ENCODE measurements at regions of chr17 and their contacts with region 1.

Region 1: GRCh38 chr17:27455914-27456680 is at the start of gene KSR1:
- DNase-seq: peak; percentile 72 to 82
- ATAC-seq: peak; percentile 86 to 97 (median 93)
- H3K4me3 ChIP-seq: peak within 1 kb of the TSS; percentile 45 to 91 (median 88)
- H3K27ac ChIP-seq: peak within 1 kb of the TSS; percentile 32 to 88 (median 80)
- H3K4me1 ChIP-seq: peaks cover 8 to 35% (median 23%) of the 10 kb centered on the region in 9 donors
- H3K27me3 ChIP-seq: no peaks in the 10 kb centered on the region
- CTCF ChIP-seq: peak in 8 of 9 donors; percentile 22 to 74 (median 53)
- total RNA-seq, gene KSR1: 5.6 to 19.6 (median 8.6) TPM

Region 2: GRCh38 chr17:27236717-27237315 is 219.3 kb before region 1 on chr17:
- intact Hi-C with region 1: loop called in 5 of 10 experiments (anchors 10 kb)
- DNase-seq: peak in 1 of 2 donors; percentile 80
- ATAC-seq: peak in 7 of 8 donors; percentile 61 to 79 (median 77)
- H3K4me3 ChIP-seq: no peak overlapping the region
- H3K27ac ChIP-seq: no peak overlapping the region
- H3K4me1 ChIP-seq: peaks cover 0 to 54% (median 3%) of the 10 kb centered on the region in 9 donors
- H3K27me3 ChIP-seq: no peaks in the 10 kb centered on the region
- CTCF ChIP-seq: peak; percentile 84 to 97 (median 94)

Region 3: DNA sequence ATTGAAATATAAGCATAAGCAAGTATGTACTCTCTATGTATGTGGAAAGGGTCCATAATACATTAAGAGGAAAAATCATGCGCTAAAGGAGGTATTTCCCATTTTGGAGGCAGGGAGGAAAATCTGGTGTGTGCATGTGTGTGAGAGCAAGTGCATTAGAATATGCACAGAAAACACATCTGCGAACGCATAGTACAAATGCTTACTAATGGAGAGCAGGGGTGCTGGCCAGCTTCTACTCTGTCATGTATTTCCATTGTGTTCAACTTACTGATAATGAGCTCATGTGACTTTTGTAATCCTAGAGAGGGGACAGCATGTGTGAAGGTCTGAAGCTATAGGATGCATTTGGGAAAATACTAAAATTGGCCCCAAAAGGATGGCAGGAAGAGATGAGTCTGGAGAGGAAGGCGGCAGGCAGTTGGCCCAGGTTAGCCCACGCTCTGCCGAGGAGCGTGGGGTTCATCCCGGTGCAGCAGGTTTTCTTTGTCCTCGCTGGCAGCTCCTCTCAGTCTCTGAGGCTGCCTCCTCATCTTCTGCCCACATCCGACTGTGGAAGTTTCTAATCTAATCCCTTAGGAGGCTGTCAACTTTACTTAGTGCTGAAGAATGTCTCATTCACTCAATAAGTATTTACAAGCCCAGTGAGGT is 17.6 kb before region 1 on chr17:
- intact Hi-C with region 1: no loop called
- DNase-seq: no peak
- ATAC-seq: no peak
- H3K4me3 ChIP-seq: no peak overlapping the region
- H3K27ac ChIP-seq: no peak overlapping the region
- H3K4me1 ChIP-seq: no peaks in the 10 kb centered on the region
- H3K27me3 ChIP-seq: no peaks in the 10 kb centered on the region
- CTCF ChIP-seq: no peak

Region 4: DNA sequence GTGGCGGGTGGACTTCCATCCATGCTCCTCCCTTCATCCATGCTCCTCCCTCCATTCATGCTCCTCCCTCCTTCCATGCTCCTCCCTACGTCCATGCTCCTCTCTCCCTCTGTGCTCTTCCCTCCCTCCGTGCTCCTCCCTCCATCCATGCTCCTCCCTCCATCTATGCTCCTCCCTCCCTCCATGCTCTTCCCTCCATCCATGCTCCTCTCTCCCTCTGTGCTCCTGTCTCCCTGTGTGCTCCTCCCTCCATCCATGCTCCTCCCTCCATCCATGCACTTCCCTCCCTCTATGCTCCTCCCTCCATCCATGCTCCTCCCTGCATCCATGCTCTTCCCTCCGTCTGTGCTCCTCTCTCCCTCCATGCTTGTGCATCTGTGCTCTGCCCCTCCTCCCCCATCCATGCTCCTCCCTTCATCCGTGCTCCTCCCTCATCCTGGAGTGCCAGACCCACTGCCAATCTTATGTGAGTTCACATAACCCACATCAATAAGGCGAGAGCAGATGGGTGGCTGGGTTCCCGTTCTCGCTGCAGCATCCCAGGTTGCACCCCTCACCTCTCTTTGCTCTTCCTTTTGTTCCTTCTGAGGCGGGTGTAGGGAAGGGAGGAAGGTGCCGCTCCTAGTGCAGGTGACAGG is 22.9 kb after region 1 on chr17:
- intact Hi-C with region 1: loop called in 1 of 10 experiments (anchors 2 kb)
- DNase-seq: no peak
- ATAC-seq: peak in 1 of 8 donors; percentile 13
- H3K4me3 ChIP-seq: no peak overlapping the region
- H3K27ac ChIP-seq: no peak overlapping the region
- H3K4me1 ChIP-seq: peaks cover 3 to 46% (median 17%) of the 10 kb centered on the region in 9 donors
- H3K27me3 ChIP-seq: no peaks in the 10 kb centered on the region
- CTCF ChIP-seq: no peak

Region 5: DNA sequence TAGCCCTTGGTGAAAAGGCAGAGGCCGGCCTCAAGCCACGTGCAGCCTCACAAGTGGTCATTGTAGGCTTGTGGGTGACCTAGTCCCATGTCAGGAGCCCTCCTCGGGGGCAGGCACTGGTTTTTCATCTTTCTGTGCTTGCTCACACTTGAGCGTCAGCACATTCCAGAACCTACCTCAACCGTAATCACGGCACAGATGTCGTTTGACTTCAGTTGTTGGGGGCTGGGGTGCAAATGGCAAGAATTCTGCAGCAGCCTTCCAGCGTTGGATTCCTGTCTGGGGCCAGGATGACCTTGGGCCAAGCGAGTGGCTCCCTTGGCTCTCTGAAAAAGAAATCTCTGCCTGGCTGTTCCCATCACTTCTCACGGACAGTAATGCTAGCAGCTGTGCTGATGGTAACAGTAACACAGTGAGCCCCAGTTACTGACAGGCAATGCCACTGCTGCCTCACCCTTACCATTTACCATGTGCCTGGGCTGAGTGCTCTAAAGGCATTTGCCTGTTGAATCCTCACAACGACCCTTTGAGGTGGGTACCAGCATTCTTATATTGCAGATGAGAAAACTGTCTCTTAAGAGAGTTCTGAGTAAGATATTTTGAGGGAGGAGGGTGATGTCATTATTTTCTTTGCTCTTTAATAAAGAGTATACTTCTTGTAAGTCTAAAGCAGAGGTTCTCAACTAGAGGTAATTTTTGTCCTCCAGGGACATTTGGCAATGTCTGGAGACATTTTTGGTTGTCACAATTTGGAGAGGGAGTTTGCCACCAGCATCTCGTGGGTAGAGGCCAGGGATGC is 46.6 kb after region 1 on chr17:
- intact Hi-C with region 1: no loop called
- DNase-seq: no peak
- ATAC-seq: peak in 7 of 8 donors; percentile 45 to 69 (median 66)
- H3K4me3 ChIP-seq: no peak overlapping the region
- H3K27ac ChIP-seq: peak overlapping the region in 1 of 10 donors; percentile 16
- H3K4me1 ChIP-seq: peaks cover 0 to 32% (median 14%) of the 10 kb centered on the region in 9 donors
- H3K27me3 ChIP-seq: no peaks in the 10 kb centered on the region
- CTCF ChIP-seq: no peak

Region 6: GRCh38 chr17:27559506-27560481 is 103.7 kb after region 1 on chr17:
- intact Hi-C with region 1: loop called in 4 of 10 experiments (anchors 5 to 10 kb)
- DNase-seq: peak; percentile 73 to 87
- ATAC-seq: peak; percentile 87 to 96 (median 92)
- H3K4me3 ChIP-seq: peak overlapping the region; percentile 11 to 51 (median 42)
- H3K27ac ChIP-seq: peak overlapping the region; percentile 56 to 89 (median 80)
- H3K4me1 ChIP-seq: peaks cover 0 to 66% (median 32%) of the 10 kb centered on the region in 9 donors
- H3K27me3 ChIP-seq: no peaks in the 10 kb centered on the region
- CTCF ChIP-seq: peak in 3 of 9 donors; percentile 15 to 29 (median 21)

Region 7: DNA sequence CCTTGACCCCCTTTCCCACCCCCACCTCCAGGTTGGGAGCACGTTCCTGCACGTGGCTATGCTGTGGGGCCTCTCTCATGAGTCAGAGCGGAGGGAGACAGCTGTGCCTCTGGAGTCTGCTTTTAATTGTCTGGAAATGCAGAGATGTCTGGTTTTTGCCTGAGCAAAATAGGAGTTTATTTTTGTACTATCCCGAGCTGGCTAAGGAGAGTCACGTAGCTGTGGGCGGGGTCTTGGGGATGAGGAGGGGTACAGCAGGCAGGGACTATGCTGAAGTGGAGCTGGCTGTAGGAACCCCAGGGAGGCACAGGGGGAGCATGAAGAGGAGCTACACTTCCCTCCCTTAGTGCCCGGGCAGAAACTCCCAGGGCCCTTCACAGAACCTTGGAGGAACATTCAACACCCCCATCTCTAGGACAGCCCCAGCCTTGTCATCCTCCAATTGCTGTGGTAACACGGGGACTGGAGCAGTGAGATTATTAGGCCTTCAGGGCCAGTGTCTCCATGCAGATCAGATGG is 130.2 kb after region 1 on chr17:
- intact Hi-C with region 1: loop called in 1 of 10 experiments (anchors 10 kb)
- DNase-seq: no peak
- ATAC-seq: peak in 4 of 8 donors; percentile 5 to 26 (median 17)
- H3K4me3 ChIP-seq: no peak overlapping the region
- H3K27ac ChIP-seq: peak overlapping the region in 1 of 10 donors; percentile 41
- H3K4me1 ChIP-seq: peaks cover 0 to 9% (median 0%) of the 10 kb centered on the region in 9 donors
- H3K27me3 ChIP-seq: no peaks in the 10 kb centered on the region
- CTCF ChIP-seq: no peak

Region 8: DNA sequence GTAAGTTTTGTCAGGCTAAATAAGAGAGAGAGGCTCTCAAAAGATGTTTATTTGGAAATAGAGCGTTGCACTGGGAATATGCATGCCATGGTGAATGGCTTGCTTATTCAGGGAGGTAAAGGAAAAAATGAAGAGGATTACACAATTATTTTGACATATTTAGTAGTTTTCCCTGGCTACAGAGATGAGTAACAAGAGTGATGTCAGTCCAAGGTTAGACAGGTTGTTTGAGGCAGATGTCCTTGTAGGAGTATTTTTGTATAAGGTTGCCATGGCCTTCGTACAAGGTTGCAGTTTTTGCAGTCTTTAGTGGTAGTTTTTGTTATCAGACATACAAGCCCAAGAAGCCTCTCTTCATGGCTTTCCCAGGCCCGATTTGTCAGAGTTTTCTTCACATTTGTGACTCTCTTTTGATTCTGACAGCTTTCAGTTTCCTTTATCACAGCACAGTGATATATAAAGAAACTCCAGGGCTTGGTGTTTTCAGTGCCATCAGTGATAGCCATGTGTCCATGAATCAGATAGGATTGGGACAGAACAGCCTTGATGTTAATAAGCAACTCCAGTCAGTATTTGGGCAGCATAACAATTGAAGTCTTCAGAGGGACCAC is 156.2 kb after region 1 on chr17:
- intact Hi-C with region 1: no loop called
- DNase-seq: no peak
- ATAC-seq: no peak
- H3K4me3 ChIP-seq: no peak overlapping the region
- H3K27ac ChIP-seq: peak overlapping the region in 1 of 10 donors; percentile 61
- H3K4me1 ChIP-seq: peaks cover 0 to 7% (median 0%) of the 10 kb centered on the region in 9 donors
- H3K27me3 ChIP-seq: no peaks in the 10 kb centered on the region
- CTCF ChIP-seq: no peak